ENCODE measurements at regions of chr9 and their contacts with region 1.

Region 1: GRCh38 chr9:107794259-107794658 is 304.7 kb upstream of the KLF4 start:
- DNase-seq: peak; percentile 22
- ATAC-seq: peak; percentile 96
- H3K4me3 ChIP-seq: no peak overlapping the region
- H3K27ac ChIP-seq: no peak overlapping the region
- H3K4me1 ChIP-seq: peaks cover 6% of the 10 kb centered on the region
- H3K27me3 ChIP-seq: no peaks in the 10 kb centered on the region
- CTCF ChIP-seq: no peak

Region 2: DNA sequence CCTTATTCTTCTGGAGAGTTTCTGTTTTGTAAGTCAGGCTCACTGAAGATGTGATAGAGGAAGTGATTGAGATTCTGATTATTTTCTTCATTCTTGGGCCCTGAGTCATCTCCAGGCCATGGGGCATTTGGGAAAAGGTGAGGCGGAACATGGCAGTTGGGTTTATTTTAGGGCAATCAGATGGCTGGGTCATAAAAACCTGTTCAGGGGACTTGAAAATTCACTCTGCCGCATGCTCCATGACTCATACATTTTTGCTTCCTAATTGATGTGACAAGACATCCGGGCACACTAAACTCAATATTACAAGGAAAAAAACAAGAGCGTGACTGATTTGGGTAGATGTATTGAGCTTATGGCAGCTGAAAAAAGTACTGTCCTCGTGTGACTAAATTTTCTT is 39.0 kb before region 1 on chr9:
- CTCF ChIA-PET with region 1: no interaction called
- POLR2A ChIA-PET with region 1: no interaction called
- intact Hi-C with region 1: loop called (anchors 1 kb)
- DNase-seq: peak; percentile 92
- ATAC-seq: peak; percentile 57
- H3K4me3 ChIP-seq: no peak overlapping the region
- H3K27ac ChIP-seq: peak overlapping the region; percentile 89
- H3K4me1 ChIP-seq: peaks cover 44% of the 10 kb centered on the region
- H3K27me3 ChIP-seq: no peaks in the 10 kb centered on the region
- CTCF ChIP-seq: no peak

Region 3: GRCh38 chr9:108156270-108156998 is 362.2 kb after region 1 on chr9:
- CTCF ChIA-PET with region 1: no interaction called
- POLR2A ChIA-PET with region 1: no interaction called
- intact Hi-C with region 1: loop called (anchors 1 kb)
- DNase-seq: peak; percentile 76
- ATAC-seq: peak; percentile 93
- H3K4me3 ChIP-seq: peak overlapping the region; percentile 47
- H3K27ac ChIP-seq: peak overlapping the region; percentile 62
- H3K4me1 ChIP-seq: peaks cover 15% of the 10 kb centered on the region
- H3K27me3 ChIP-seq: no peaks in the 10 kb centered on the region
- CTCF ChIP-seq: no peak

Measured in PC-3 (cell line).